ENCODE measurements at regions of chr20 and their contacts with region 1.

Region 1: DNA sequence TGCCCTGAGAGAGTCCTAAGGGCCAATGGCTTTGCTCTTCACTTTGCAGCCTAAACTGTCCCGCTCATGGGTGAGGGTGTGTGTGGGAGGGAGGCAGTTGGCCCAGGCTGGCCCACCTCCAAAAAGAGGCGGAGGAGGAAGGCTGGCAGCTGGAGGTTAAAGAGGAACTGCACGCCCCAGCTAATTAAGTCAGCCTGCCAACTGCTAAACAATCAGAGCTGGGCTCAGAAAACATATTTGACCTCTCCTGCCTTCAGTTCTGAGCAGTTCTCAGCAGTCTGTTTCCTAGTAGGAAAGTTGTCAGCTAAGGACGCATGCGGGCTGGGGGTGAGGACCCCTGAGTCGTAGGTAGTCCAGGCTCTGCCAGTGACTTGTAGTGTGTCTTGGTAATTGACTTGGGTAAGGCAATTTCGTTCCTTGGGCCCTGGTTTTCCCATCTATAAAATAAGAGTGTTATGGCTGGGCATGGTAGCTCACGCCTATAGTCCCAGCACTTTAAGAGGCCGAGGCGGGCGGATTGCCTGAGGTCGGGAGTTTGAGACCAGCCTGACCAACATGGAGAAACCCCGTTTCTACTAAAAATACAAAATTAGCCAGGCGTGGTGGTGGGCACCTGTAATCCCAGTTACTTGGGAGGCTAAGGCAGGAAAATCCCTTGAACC is 17.0 kb downstream of the GSS start:
- DNase-seq: peak in 1 of 35 experiments; percentile 9
- ATAC-seq: no peak
- H3K4me3 ChIP-seq: no peak overlapping the region
- H3K4me3 Mint-ChIP-seq: no peak overlapping the region
- H3K27ac ChIP-seq: no peak overlapping the region
- H3K27ac Mint-ChIP-seq: no peak overlapping the region
- H3K4me1 ChIP-seq: no peaks in the 10 kb centered on the region
- H3K4me1 Mint-ChIP-seq: no peaks in the 10 kb centered on the region
- H3K27me3 ChIP-seq: no peaks in the 10 kb centered on the region
- H3K27me3 Mint-ChIP-seq: no peaks in the 10 kb centered on the region

Region 2: DNA sequence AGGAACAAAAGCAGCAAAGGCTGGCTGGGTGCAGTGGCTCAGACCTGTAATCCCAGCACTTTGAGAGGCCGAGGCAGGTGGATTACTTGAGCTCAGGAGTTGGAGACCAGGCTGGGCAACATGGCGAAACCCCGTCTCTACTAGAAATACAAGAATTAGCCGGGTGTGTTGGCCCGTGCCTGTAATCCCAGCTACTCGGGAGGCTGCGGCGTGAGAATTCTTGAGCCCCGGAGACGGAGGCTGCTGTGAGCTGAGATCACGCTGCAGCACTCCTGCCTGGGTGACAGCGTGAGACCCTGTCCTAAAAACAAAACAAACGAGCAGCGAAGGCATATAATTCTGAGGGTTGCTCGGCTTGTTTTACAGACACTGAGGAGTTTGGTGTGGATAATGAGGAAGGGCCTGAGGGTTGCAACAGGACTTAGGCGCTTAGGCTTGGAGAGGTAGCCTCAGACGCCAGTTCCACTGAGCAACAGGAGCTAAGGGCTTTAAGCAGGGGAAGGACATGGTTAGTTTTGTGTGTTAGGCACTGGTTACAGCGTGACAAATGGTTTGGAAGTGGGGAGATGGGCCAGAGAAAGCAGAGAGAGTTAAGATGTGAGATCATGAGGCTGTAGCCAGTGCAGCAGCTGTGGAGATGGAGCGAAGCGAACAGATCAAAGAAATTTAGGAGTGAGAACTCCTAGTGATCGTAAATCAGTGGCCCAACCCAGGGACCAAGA is 18.3 kb after region 1 on chr20:
- CTCF ChIA-PET with region 1: interaction called in 1 of 2 experiments, 4 read pairs
- POLR2A ChIA-PET with region 1: interaction called in 1 of 2 experiments, 10 read pairs
- DNase-seq: no peak
- ATAC-seq: no peak
- H3K4me3 ChIP-seq: no peak overlapping the region
- H3K4me3 Mint-ChIP-seq: peak overlapping the region; percentile 13 to 95 (median 90)
- H3K27ac ChIP-seq: no peak overlapping the region
- H3K27ac Mint-ChIP-seq: peak overlapping the region in 1 of 2 donors; percentile 17
- H3K4me1 ChIP-seq: peaks cover 4 to 16% of the 10 kb centered on the region in 2 experiments
- H3K4me1 Mint-ChIP-seq: peaks cover 29 to 36% (median 30%) of the 10 kb centered on the region in 3 donors
- H3K27me3 ChIP-seq: no peaks in the 10 kb centered on the region
- H3K27me3 Mint-ChIP-seq: no peaks in the 10 kb centered on the region

Measured in T-cell (primary cell).